Heart right ventricle (tissue), 16 donors: ENCODE measurements at regions of chr19 and their contacts with region 1.

Region 1: GRCh38 chr19:14073261-14073924 is 807 bp downstream of the MISP3 start:
- DNase-seq: peak; percentile 66 to 82
- ATAC-seq: peak; percentile 40 to 61 (median 52)
- H3K4me3 ChIP-seq: peak overlapping the region; percentile 71 to 97 (median 82)
- H3K27ac ChIP-seq: peak overlapping the region; percentile 87 to 97 (median 90)
- H3K4me1 ChIP-seq: peaks cover 11 to 49% (median 37%) of the 10 kb centered on the region in 9 donors
- H3K27me3 ChIP-seq: peaks cover 0 to 10% (median 0%) of the 10 kb centered on the region in 7 donors
- CTCF ChIP-seq: peak in 7 of 9 donors; percentile 25 to 86 (median 67)

Region 2: GRCh38 chr19:13597640-13598039 is 475.8 kb before region 1 on chr19:
- intact Hi-C with region 1: loop called in 2 of 10 experiments (anchors 5 to 10 kb)
- DNase-seq: peak in 1 of 2 donors; percentile 48
- ATAC-seq: peak; percentile 68 to 92 (median 78)
- H3K4me3 ChIP-seq: no peak overlapping the region
- H3K27ac ChIP-seq: no peak overlapping the region
- H3K4me1 ChIP-seq: no peaks in the 10 kb centered on the region
- H3K27me3 ChIP-seq: peaks cover 0 to 52% (median 22%) of the 10 kb centered on the region in 7 donors
- CTCF ChIP-seq: peak; percentile 27 to 76 (median 65)

Region 3: DNA sequence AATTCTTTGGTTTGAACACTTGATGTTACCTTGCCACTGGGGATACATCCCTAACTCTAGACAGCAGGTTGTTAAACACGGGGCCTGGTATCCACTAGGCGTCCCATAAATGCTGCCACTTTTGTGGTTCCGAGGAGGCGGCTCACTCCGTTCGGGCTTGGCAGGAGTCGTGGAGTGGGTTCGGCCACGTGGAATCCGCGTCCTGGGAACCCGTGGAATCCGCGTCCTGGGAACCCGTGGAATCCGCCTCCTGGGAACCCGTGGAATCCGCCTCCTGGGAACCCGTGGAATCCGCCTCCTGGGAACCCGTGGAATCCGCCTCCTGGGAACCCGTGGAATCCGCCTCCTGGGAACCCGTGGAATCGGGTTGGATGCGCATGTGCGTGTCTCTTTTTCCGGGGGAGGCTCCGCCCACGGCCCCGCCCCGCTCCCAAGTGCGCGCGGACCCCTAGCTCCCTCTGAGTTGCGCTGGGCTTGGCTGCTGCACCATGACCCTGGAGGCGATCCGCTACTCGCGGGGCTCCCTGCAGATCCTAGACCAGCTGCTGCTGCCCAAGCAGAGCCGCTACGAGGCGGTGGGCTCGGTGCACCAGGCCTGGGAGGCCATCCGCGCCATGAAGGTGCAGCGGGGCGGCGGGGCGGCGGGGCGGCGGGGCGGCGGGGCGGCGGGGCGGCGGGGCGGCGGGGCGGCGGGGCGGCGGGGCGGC is 309.1 kb before region 1 on chr19 and contains the start of gene MRI1:
- intact Hi-C with region 1: loop called in 1 of 10 experiments (anchors 10 kb)
- DNase-seq: peak; percentile 83 to 84
- ATAC-seq: peak; percentile 80 to 96 (median 90)
- H3K4me3 ChIP-seq: peak within 1 kb of the TSS; percentile 39 to 96 (median 76)
- H3K27ac ChIP-seq: peak within 1 kb of the TSS; percentile 43 to 81 (median 69)
- H3K4me1 ChIP-seq: peaks cover 0 to 15% (median 10%) of the 10 kb centered on the region in 9 donors
- H3K27me3 ChIP-seq: no peaks in the 10 kb centered on the region
- CTCF ChIP-seq: no peak
- total RNA-seq, gene MRI1: 9.9 to 18.7 (median 13.0) TPM

Region 4: GRCh38 chr19:13774217-13775191 is 298.9 kb before region 1 on chr19 and contains the start of gene C19orf53:
- intact Hi-C with region 1: loop called in 2 of 10 experiments (anchors 10 kb)
- DNase-seq: peak; percentile 88 to 93
- ATAC-seq: peak; percentile 95 to 99 (median 98)
- H3K4me3 ChIP-seq: peak within 1 kb of the TSS; percentile 74 to 98 (median 89)
- H3K27ac ChIP-seq: peak within 1 kb of the TSS; percentile 62 to 94 (median 86)
- H3K4me1 ChIP-seq: peaks cover 0 to 23% (median 19%) of the 10 kb centered on the region in 9 donors
- H3K27me3 ChIP-seq: no peaks in the 10 kb centered on the region
- CTCF ChIP-seq: no peak
- total RNA-seq, gene C19orf53: 80.5 to 101 (median 90.3) TPM

Region 5: GRCh38 chr19:13952154-13953035 is 121.0 kb before region 1 on chr19 and contains the start of gene DCAF15:
- intact Hi-C with region 1: loop called in 1 of 10 experiments (anchors 5 kb)
- DNase-seq: peak; percentile 99 to 100
- ATAC-seq: peak; percentile 97 to 99 (median 98)
- H3K4me3 ChIP-seq: peak within 1 kb of the TSS; percentile 48 to 84 (median 76)
- H3K27ac ChIP-seq: peak within 1 kb of the TSS; percentile 57 to 90 (median 84)
- H3K4me1 ChIP-seq: peaks cover 8 to 29% (median 15%) of the 10 kb centered on the region in 9 donors
- H3K27me3 ChIP-seq: no peaks in the 10 kb centered on the region
- CTCF ChIP-seq: no peak
- total RNA-seq, gene DCAF15: 15.5 to 21.2 (median 17.8) TPM

Region 6: GRCh38 chr19:14006243-14006765 is 67.1 kb before region 1 on chr19 and contains the start of gene RFX1:
- intact Hi-C with region 1: loop called in 1 of 10 experiments (anchors 2 kb)
- DNase-seq: peak; percentile 100
- ATAC-seq: peak; percentile 86 to 93 (median 90)
- H3K4me3 ChIP-seq: peak within 1 kb of the TSS; percentile 54 to 94 (median 76)
- H3K27ac ChIP-seq: peak within 1 kb of the TSS; percentile 95 to 100 (median 99)
- H3K4me1 ChIP-seq: peaks cover 11 to 46% (median 35%) of the 10 kb centered on the region in 9 donors
- H3K27me3 ChIP-seq: no peaks in the 10 kb centered on the region
- CTCF ChIP-seq: no peak
- total RNA-seq, gene RFX1: 10.4 to 15.8 (median 12.0) TPM

Region 7: DNA sequence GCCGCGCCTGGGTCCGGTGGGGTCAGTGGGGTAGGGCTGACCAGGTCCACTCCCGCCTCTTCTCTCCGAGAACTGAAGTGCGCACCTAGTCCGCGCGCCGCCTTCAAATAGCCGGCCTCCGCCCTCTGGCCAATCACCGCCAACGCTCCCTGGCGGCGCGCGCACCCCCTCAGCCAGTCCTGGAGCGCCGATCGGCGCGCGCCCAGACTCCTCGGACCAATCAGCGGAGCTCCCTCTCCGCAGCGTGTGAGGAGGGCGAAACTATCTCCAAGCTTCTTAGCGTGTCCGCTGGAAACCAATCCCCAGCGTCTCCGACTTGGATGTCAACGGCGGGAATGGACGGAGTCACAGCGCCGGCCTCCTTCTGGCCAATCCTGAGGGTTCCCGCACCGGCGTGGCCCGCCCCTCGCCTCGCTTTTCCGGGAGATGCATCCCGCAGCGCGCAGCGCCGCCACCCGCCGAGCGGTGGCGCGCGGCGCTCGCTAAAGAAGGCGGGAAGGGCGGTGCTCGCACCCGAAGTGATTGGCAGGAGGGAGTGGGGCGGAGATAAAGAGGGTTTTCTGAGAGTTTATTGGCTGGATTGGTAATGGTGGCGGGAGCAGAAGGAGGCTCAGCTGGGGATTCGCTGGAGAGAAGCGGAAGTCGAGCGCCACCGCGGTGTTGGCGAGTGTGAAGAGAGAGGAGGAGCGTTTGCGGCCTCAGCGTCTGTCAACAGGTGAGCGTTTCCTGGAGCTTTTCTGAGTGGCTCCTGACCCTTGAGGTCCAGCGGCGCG is 63.3 kb after region 1 on chr19 and contains the start of gene ASF1B:
- intact Hi-C with region 1: loop called in 5 of 10 experiments (anchors 2 to 5 kb)
- DNase-seq: peak; percentile 99
- ATAC-seq: peak; percentile 93 to 96 (median 95)
- H3K4me3 ChIP-seq: peak within 1 kb of the TSS; percentile 56 to 91 (median 74)
- H3K27ac ChIP-seq: peak within 1 kb of the TSS; percentile 83 to 97 (median 92)
- H3K4me1 ChIP-seq: peaks cover 3 to 49% (median 31%) of the 10 kb centered on the region in 9 donors
- H3K27me3 ChIP-seq: no peaks in the 10 kb centered on the region
- CTCF ChIP-seq: peak; percentile 60 to 98 (median 91)
- total RNA-seq, gene ASF1B: 0.17 to 5.6 (median 0.63) TPM

Region 8: DNA sequence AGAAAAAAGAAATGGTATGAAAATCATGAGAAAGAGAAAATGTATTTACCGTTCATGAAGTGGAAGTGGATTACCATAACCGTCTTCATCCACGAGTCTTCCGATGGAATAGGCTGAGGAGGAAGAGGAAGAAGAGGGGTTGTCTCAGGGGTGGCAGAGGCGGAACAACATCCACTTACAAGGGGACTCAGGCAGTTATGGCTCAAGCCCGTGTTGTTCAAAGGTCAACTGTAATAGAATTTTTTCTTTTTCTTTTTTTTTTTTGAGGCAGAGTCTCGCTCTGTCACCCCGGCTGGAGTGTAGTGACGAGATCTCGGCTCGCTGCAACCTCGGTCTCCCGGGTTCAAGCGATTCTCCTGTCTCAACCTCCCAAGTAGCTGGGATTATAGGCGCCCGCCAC is 149.5 kb after region 1 on chr19:
- intact Hi-C with region 1: no loop called
- DNase-seq: no peak
- ATAC-seq: no peak
- H3K4me3 ChIP-seq: no peak overlapping the region
- H3K27ac ChIP-seq: no peak overlapping the region
- H3K4me1 ChIP-seq: peaks cover 0 to 8% (median 0%) of the 10 kb centered on the region in 9 donors
- H3K27me3 ChIP-seq: peaks cover 0 to 3% (median 0%) of the 10 kb centered on the region in 7 donors
- CTCF ChIP-seq: no peak